ENCODE measurements at regions of chr17 and their contacts with region 1.

Region 1: GRCh38 chr17:4733073-4733531 is 1.9 kb downstream of the MED11 start:
- DNase-seq: no peak
- ATAC-seq: no peak
- H3K4me3 ChIP-seq: no peak overlapping the region
- H3K27ac ChIP-seq: no peak overlapping the region
- H3K4me1 ChIP-seq: peaks cover 4 to 14% of the 10 kb centered on the region in 2 experiments; a peak in 3 of 5 replicates
- H3K27me3 ChIP-seq: no peaks in the 10 kb centered on the region; a peak in 1 of 5 replicates
- CTCF ChIP-seq: 0 out of 6 replicates have a peak, but pooled peaks of 1 of the 3 experiments have one; percentile 7
- EP300 ChIP-seq: no peak
- POLR2A ChIP-seq: no peak
- RAD21 ChIP-seq: no peak

Region 2: DNA sequence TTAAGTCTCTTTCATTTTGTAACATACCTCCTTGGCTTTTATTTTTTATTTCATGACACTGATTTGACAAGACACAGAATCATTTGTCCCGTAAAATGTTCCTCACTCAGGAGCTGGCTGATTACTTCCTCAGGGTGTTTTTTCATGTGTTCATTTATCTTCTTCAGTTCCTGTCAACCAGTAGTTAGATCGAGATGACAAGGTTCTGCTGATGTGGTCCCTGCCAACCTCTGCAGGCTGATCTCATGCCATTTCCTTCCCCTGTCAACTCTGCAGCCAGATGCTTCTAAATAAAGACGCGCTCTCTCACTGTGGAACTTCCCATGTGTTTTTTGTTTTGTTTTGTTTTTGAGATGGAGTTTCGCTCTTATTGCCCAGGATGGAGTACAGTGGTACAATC is 14.7 kb after region 1 on chr17:
- CTCF ChIA-PET with region 1: no interaction called
- POLR2A ChIA-PET with region 1: no interaction called
- in situ Hi-C with region 1: no loop called
- intact Hi-C with region 1: no loop called
- DNase-seq: no peak
- ATAC-seq: no peak
- H3K4me3 ChIP-seq: no peak overlapping the region
- H3K27ac ChIP-seq: no peak overlapping the region
- H3K4me1 ChIP-seq: peaks cover 0 to 9% of the 10 kb centered on the region in 2 experiments; a peak in 2 of 5 replicates
- H3K27me3 ChIP-seq: peaks cover 12 to 23% of the 10 kb centered on the region in 2 experiments; a peak in 3 of 5 replicates
- CTCF ChIP-seq: no peak
- EP300 ChIP-seq: no peak
- POLR2A ChIP-seq: no peak
- RAD21 ChIP-seq: no peak

Region 3: DNA sequence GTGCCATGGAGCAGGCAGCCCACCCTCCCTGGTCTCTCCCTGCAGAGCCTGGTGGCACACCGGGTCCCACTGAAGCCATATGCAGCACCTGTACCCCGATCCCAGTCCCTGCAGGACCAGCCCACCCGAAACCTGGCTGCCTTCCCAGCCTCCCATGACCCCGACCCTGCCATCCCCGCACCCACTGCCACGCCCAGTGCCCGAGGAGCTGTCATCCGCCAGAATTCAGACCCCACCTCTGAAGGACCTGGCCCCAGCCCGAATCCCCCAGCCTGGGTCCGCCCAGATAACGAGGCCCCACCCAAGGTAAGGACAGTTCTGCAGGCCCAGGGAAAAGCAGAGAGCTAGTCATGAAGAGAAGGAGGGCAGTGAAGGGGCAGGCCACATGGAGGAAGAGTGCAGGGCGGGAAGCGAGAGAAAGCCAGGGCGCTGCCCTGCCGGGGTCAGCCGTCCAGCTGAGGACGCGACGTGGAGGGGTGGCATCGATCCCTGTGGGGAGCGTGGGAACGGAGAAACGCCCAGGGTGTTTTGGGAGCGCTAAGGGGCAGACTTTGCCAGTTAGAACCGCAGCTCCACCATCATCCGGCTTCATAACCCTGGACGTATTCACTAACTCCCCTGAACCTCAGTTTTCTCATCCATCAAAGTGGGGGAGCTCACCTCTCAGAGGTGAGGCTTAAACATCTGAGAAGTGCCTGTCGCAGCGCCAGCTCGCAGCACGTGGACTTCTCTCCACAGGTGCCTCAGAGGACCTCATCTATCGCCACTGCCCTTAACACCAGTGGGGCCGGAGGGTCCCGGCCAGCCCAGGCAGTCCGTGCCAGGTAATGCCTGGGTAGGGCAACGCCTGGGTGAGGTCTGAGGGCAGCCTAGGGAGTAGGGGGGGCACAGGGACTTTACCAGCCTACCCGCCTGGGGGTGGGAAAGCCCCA is 158.6 kb after region 1 on chr17:
- CTCF ChIA-PET with region 1: no interaction called
- POLR2A ChIA-PET with region 1: no interaction called
- in situ Hi-C with region 1: no loop called
- intact Hi-C with region 1: loop called (anchors 1 kb)
- DNase-seq: no peak
- ATAC-seq: no peak
- H3K4me3 ChIP-seq: no peak overlapping the region
- H3K27ac ChIP-seq: no peak overlapping the region
- H3K4me1 ChIP-seq: peaks cover 0 to 14% of the 10 kb centered on the region in 2 experiments; a peak in 2 of 5 replicates
- H3K27me3 ChIP-seq: no peaks in the 10 kb centered on the region
- CTCF ChIP-seq: no peak
- EP300 ChIP-seq: no peak
- POLR2A ChIP-seq: no peak
- RAD21 ChIP-seq: no peak

Measured in K562 (cell line).